CD4-positive, alpha-beta T cell (primary cell): ENCODE measurements at regions of chr10 and their contacts with region 1.

Region 1: DNA sequence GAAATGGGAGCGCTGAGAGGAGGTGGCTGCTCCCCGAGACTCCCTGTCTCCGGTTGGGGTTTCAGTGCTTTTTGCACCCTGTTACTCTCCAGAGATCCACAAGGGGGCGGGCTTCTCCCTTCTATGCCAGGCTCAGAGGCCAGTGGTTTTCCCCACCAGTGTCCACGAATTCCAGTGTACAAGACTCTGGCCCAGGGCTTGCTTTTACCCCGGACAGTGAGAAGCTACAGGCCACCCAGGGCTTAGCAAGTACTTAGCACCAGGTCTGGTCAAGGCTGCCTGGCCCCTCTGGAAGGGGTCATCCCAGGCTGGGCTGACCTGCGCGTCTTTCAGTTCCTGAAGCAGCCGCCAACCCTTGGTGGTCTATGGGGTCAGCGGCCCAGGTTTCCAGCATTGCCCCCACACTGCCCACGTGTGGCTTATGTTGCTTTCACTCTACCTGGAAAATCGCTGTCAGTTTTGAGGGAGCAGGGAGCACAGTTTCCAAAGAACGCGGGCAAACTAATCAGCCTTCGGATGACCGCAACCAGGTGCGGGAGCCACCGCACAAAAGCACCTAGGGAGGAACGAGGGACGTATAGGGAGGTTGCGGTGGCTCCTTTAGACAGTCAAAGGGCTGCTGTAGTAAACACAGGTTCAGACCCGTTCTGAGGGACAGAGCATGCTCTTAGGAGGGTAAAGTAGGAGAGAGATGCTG is 6.8 kb downstream of the CYP26A1 start:
- DNase-seq: peak; percentile 27 to 70 (median 38)
- ATAC-seq: peak; percentile 64
- H3K4me3 ChIP-seq: no peak overlapping the region
- H3K4me3 Mint-ChIP-seq: peak overlapping the region; percentile 23
- H3K27ac ChIP-seq: no peak overlapping the region
- H3K27ac Mint-ChIP-seq: no peak overlapping the region
- H3K4me1 ChIP-seq: peaks cover 7% of the 10 kb centered on the region
- H3K4me1 Mint-ChIP-seq: peaks cover 5% of the 10 kb centered on the region
- H3K27me3 ChIP-seq: peaks cover 24 to 38% of the 10 kb centered on the region in 2 experiments
- H3K27me3 Mint-ChIP-seq: peaks cover 57% of the 10 kb centered on the region
- CTCF ChIP-seq: peak; percentile 76

Region 2: GRCh38 chr10:92880233-92880861 is 200.2 kb before region 1 on chr10:
- CTCF ChIA-PET with region 1: no interaction called
- POLR2A ChIA-PET with region 1: no interaction called
- intact Hi-C with region 1: loop called (anchors 5 to 10 kb)
- DNase-seq: peak in 4 of 14 experiments; percentile 13 to 56 (median 56)
- ATAC-seq: peak; percentile 39
- H3K4me3 ChIP-seq: no peak overlapping the region
- H3K4me3 Mint-ChIP-seq: no peak overlapping the region
- H3K27ac ChIP-seq: no peak overlapping the region
- H3K27ac Mint-ChIP-seq: no peak overlapping the region
- H3K4me1 ChIP-seq: peaks cover 5% of the 10 kb centered on the region
- H3K4me1 Mint-ChIP-seq: peaks cover 29% of the 10 kb centered on the region
- H3K27me3 ChIP-seq: no peaks in the 10 kb centered on the region
- H3K27me3 Mint-ChIP-seq: no peaks in the 10 kb centered on the region
- CTCF ChIP-seq: peak; percentile 75

Region 3: DNA sequence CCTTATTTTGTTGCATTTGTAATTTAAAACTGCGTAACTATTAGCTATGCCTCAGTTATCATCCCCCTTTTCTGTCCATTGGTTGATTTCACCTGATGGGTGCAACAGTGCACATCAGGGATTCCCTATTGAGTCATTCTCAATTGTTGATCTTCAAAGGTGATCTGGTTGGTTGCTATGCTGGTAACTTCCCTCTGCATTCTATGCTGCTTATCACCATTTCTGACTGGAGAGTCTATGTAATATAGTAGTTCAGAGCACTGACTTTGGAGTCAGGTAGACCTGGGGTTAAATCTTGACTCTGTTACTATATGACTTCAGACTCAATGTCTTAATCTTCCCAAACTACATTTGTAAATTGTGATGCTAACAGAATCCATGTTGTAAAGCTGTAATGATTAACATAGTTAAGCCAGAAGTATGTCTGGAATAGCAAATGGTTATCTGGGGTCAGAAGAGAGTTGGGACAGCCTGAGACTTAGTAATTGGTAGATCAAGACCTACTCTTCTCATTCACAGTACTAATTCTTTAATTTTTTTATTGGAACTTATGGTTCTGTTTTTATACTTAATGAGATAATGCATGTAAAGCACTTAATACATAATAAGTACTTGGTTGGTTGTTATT is 194.1 kb before region 1 on chr10:
- CTCF ChIA-PET with region 1: no interaction called
- POLR2A ChIA-PET with region 1: no interaction called
- intact Hi-C with region 1: loop called (anchors 5 to 10 kb)
- DNase-seq: no peak
- ATAC-seq: no peak
- H3K4me3 ChIP-seq: no peak overlapping the region
- H3K4me3 Mint-ChIP-seq: no peak overlapping the region
- H3K27ac ChIP-seq: no peak overlapping the region
- H3K27ac Mint-ChIP-seq: no peak overlapping the region
- H3K4me1 ChIP-seq: no peaks in the 10 kb centered on the region
- H3K4me1 Mint-ChIP-seq: peaks cover 14% of the 10 kb centered on the region
- H3K27me3 ChIP-seq: no peaks in the 10 kb centered on the region
- H3K27me3 Mint-ChIP-seq: no peaks in the 10 kb centered on the region
- CTCF ChIP-seq: no peak